CD8-positive, alpha-beta T cell (primary cell): ENCODE measurements at regions of chr14 and their contacts with region 1.

Region 1: DNA sequence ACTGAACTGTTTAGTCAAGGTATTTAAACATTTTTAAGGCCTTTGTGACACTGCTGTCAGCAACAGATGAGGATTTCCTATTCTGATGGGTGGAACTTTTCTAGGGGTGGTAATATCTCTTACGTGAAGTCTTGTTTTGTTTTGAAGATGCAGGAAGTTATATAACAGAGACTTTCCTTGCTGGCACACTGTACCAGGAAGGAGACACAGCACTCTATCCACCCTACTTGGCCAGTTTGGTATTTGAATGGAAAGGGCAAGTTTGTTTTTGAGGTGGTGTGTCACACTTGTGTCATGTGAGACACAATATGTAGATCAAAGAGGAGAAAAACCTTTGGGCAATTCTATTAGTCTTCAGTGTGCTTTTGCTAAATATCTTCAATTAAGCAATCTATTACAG is 51.6 kb upstream of the SRP54 start:
- DNase-seq: peak in 7 of 9 experiments; percentile 9 to 87 (median 59)
- ATAC-seq: peak; percentile 90
- H3K4me3 ChIP-seq: peak overlapping the region in 1 of 2 experiments; percentile 4
- H3K4me3 Mint-ChIP-seq: peak overlapping the region; percentile 49
- H3K27ac ChIP-seq: peak overlapping the region; percentile 87 to 93
- H3K27ac Mint-ChIP-seq: peak overlapping the region; percentile 97
- H3K4me1 ChIP-seq: peaks cover 28% of the 10 kb centered on the region
- H3K4me1 Mint-ChIP-seq: peaks cover 30% of the 10 kb centered on the region
- H3K27me3 ChIP-seq: no peaks in the 10 kb centered on the region
- H3K27me3 Mint-ChIP-seq: no peaks in the 10 kb centered on the region
- CTCF ChIP-seq: no peak

Region 2: DNA sequence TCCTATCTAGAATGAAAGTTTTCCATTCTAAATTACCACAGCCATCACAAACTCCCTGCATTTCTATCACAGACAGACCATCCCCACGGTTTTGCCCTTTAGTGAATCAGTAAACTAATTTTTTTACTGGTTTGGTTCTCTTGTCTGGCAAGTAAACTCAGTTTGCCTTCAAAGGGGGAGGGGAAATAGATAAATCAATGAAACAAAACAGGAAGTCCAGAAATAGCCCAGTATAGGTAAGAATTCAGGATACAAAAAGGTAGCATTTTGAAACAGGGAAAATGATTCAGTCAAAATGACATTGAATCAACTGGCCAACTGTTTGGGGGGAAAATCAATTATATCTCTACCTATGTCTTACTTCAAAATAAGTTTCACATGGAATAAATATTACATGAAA is 40.3 kb before region 1 on chr14:
- CTCF ChIA-PET with region 1: no interaction called
- POLR2A ChIA-PET with region 1: no interaction called
- intact Hi-C with region 1: loop called in 1 of 2 experiments (anchors 5 kb)
- DNase-seq: no peak
- ATAC-seq: no peak
- H3K4me3 ChIP-seq: no peak overlapping the region
- H3K4me3 Mint-ChIP-seq: no peak overlapping the region
- H3K27ac ChIP-seq: no peak overlapping the region
- H3K27ac Mint-ChIP-seq: no peak overlapping the region
- H3K4me1 ChIP-seq: no peaks in the 10 kb centered on the region
- H3K4me1 Mint-ChIP-seq: peaks cover 5% of the 10 kb centered on the region
- H3K27me3 ChIP-seq: no peaks in the 10 kb centered on the region
- H3K27me3 Mint-ChIP-seq: no peaks in the 10 kb centered on the region
- CTCF ChIP-seq: no peak

Region 3: DNA sequence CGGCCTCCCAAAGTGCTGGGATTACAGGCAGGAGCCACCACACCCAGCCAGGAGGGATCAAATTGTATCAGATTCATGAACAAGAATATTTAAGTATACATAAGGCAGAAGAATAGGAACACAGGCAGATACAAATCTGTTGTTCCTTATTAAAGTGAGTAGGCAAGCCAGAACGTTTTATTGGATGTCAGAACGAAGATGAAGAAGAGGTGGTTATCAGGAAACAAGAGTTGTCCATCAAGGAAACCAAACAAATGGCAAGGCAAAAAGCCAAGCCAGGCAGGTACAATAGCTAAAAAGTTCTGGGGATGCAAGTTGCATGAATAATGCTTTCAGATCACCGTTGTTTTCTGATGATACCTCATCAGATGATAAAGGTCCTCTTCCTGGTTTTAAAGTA is 24.9 kb before region 1 on chr14:
- CTCF ChIA-PET with region 1: no interaction called
- POLR2A ChIA-PET with region 1: interaction called, 3 read pairs
- intact Hi-C with region 1: loop called in 1 of 2 experiments (anchors 1 kb)
- DNase-seq: no peak
- ATAC-seq: no peak
- H3K4me3 ChIP-seq: no peak overlapping the region
- H3K4me3 Mint-ChIP-seq: no peak overlapping the region
- H3K27ac ChIP-seq: no peak overlapping the region
- H3K27ac Mint-ChIP-seq: no peak overlapping the region
- H3K4me1 ChIP-seq: no peaks in the 10 kb centered on the region
- H3K4me1 Mint-ChIP-seq: no peaks in the 10 kb centered on the region
- H3K27me3 ChIP-seq: no peaks in the 10 kb centered on the region
- H3K27me3 Mint-ChIP-seq: no peaks in the 10 kb centered on the region
- CTCF ChIP-seq: no peak

Region 4: DNA sequence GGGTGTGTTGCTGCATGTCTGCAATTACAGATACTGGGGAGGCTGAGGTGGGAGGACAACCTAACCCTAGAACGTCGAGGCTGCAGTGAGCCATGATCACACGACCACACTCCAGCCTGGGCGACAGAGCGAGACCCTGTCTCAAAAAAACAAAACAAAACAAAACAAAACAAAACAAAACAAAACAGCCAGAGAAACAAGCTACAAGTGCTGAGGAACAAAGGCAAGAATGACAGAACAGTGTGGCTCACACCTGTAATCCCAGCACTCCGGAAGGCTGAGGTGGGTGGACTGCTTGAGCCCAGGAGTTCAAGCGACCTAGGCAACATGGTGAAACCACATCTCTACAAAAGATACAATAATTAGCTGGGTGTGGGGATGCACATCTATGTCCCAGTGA is 13.5 kb after region 1 on chr14:
- CTCF ChIA-PET with region 1: no interaction called
- POLR2A ChIA-PET with region 1: interaction called, 4 read pairs
- intact Hi-C with region 1: loop called in 1 of 2 experiments (anchors 1 kb)
- DNase-seq: no peak
- ATAC-seq: no peak
- H3K4me3 ChIP-seq: no peak overlapping the region
- H3K4me3 Mint-ChIP-seq: no peak overlapping the region
- H3K27ac ChIP-seq: no peak overlapping the region
- H3K27ac Mint-ChIP-seq: no peak overlapping the region
- H3K4me1 ChIP-seq: no peaks in the 10 kb centered on the region
- H3K4me1 Mint-ChIP-seq: no peaks in the 10 kb centered on the region
- H3K27me3 ChIP-seq: no peaks in the 10 kb centered on the region
- H3K27me3 Mint-ChIP-seq: no peaks in the 10 kb centered on the region
- CTCF ChIP-seq: no peak